GM23248 (cell line): ENCODE measurements at regions of chr20 and their contacts with region 1.

Region 1: DNA sequence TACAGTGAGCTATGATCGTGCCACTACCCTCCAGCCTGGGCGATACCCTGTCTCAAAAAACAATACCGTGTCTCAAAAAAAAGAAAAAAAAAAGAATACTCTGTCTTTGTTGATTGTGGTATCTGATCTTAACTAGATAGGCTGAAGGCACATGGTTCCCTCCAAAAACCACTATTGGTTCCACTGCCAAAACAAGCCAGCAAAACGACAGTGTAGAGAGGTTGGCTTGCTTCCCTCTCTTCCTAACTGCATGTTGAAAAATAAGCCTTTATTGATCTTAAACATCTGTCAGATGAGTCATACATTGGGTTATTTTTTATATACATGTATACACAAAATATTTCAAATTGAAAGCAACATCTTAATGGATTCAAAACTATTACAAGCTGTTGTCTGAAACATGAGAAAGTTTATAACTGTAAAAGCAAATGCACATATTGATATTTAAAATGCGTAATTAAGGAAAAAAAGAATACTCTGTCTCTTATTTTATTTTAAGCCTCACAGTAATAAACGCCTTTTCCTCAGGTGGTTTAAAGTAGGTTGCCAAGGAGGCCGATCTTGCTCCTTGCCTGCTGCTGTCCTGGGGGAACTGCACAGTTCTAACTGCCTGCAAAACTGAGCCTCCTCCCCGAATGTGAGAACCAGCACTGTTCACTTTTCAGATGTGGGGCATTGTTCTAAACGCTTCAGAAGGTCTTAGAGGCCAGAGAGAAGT is 7.0 kb upstream of the NINL start:
- DNase-seq: no peak
- H3K4me3 ChIP-seq: no peak overlapping the region
- H3K27ac ChIP-seq: no peak overlapping the region
- H3K4me1 ChIP-seq: no peaks in the 10 kb centered on the region
- H3K27me3 ChIP-seq: no peaks in the 10 kb centered on the region

Region 2: DNA sequence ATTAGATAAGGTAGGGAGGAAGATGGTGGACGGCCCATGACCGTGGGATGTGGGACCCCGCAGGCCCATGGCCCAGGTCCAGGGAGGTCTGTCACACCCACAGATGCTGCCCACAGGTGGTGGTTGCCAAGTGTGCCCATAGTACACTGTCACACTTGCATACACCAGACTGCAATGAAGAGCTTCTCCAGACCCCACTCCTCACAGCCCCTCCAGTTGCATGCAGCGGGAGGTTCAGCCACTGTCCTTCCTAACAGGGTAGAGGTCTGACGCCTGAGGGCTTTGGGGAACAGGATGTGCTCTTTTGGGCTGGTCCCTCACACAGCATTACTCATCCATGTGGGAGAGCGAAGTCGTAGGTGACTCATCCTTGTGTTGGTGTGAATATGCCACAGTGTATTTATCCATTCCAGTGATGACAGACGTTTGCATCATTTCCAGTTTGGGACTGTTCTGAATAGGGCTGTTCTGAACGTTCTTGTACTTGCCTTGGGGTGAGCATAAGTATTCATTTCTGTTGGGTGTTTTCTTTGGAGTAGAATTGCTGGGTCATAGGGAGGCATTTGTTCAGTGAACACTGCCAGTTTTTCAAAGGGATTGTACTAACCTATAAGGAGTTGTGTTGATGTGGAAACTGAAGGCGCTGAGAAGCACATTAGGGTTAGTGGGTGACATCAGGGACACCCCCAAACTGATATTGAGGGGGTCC is 354.5 kb before region 1 on chr20:
- in situ Hi-C with region 1: no loop called
- DNase-seq: peak; percentile 99
- H3K4me3 ChIP-seq: 0 out of 2 replicates have a peak overlapping the region, but pooled peaks have one; percentile 24
- H3K27ac ChIP-seq: peak overlapping the region; percentile 98
- H3K4me1 ChIP-seq: peaks cover 44% of the 10 kb centered on the region
- H3K27me3 ChIP-seq: no peaks in the 10 kb centered on the region

Region 3: GRCh38 chr20:25281541-25281991 is 310.7 kb before region 1 on chr20:
- in situ Hi-C with region 1: no loop called
- DNase-seq: no peak
- H3K4me3 ChIP-seq: no peak overlapping the region
- H3K27ac ChIP-seq: no peak overlapping the region
- H3K4me1 ChIP-seq: no peaks in the 10 kb centered on the region
- H3K27me3 ChIP-seq: no peaks in the 10 kb centered on the region

Region 4: DNA sequence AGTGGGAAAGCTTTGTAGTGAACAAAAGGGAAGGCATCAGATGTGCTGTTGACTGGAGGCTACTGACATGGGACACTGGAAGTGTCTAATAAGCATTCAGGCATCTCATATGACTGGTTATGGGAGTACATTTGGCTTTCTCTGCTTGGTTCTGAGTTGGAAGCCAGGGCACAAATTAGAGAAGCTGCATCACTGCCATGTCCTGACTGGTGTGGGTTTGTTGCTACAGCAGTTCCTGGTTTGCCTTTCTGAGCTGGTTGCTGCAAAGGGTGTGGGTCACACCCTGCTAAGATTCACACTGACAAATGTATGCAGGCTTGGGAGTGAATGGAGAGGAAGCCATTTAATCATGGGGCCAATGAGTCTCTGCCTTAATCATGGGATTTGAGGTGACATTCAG is 67.7 kb after region 1 on chr20:
- in situ Hi-C with region 1: loop called (anchors 10 kb)
- DNase-seq: no peak
- H3K4me3 ChIP-seq: no peak overlapping the region
- H3K27ac ChIP-seq: no peak overlapping the region
- H3K4me1 ChIP-seq: no peaks in the 10 kb centered on the region
- H3K27me3 ChIP-seq: no peaks in the 10 kb centered on the region